Panc1 (cell line): ENCODE measurements at regions of chr6 and their contacts with region 1.

Region 1: GRCh38 chr6:113858480-113859348 is 1.6 kb downstream of the MARCKS start:
- DNase-seq: no peak
- ATAC-seq: peak; percentile 91
- H3K4me3 ChIP-seq: peak overlapping the region; percentile 78 to 86
- H3K27ac ChIP-seq: peak overlapping the region; percentile 88
- H3K4me1 ChIP-seq: peaks cover 6% of the 10 kb centered on the region; the same call in 1 of the 2 replicates
- H3K27me3 ChIP-seq: peaks cover 13% of the 10 kb centered on the region
- CTCF ChIP-seq: peak; percentile 100

Region 2: GRCh38 chr6:112180095-112180820 is 1678.5 kb before region 1 on chr6:
- CTCF ChIA-PET with region 1: interaction called, 6 read pairs
- POLR2A ChIA-PET with region 1: no interaction called
- in situ Hi-C with region 1: no loop called
- intact Hi-C with region 1: loop called (anchors 5 kb)
- DNase-seq: peak; percentile 52
- ATAC-seq: peak; percentile 96
- H3K4me3 ChIP-seq: no peak overlapping the region
- H3K27ac ChIP-seq: no peak overlapping the region; the same call in 1 of the 2 replicates
- H3K4me1 ChIP-seq: no peaks in the 10 kb centered on the region
- H3K27me3 ChIP-seq: no peaks in the 10 kb centered on the region
- CTCF ChIP-seq: peak; percentile 82; the same call in 1 of the 2 replicates

Region 3: GRCh38 chr6:112780498-112781096 is 1078.1 kb before region 1 on chr6:
- CTCF ChIA-PET with region 1: interaction called, 3 read pairs
- POLR2A ChIA-PET with region 1: no interaction called
- in situ Hi-C with region 1: no loop called
- intact Hi-C with region 1: loop called (anchors 5 kb)
- DNase-seq: peak; percentile 60
- ATAC-seq: peak; percentile 91
- H3K4me3 ChIP-seq: no peak overlapping the region
- H3K27ac ChIP-seq: no peak overlapping the region; the same call in 1 of the 2 replicates
- H3K4me1 ChIP-seq: no peaks in the 10 kb centered on the region
- H3K27me3 ChIP-seq: no peaks in the 10 kb centered on the region
- CTCF ChIP-seq: peak; percentile 90

Region 4: GRCh38 chr6:113328886-113329381 is 529.8 kb before region 1 on chr6:
- CTCF ChIA-PET with region 1: no interaction called
- POLR2A ChIA-PET with region 1: no interaction called
- in situ Hi-C with region 1: no loop called
- intact Hi-C with region 1: loop called (anchors 10 kb)
- DNase-seq: no peak
- ATAC-seq: no peak
- H3K4me3 ChIP-seq: no peak overlapping the region
- H3K27ac ChIP-seq: no peak overlapping the region
- H3K4me1 ChIP-seq: no peaks in the 10 kb centered on the region
- H3K27me3 ChIP-seq: no peaks in the 10 kb centered on the region
- CTCF ChIP-seq: no peak

Region 5: DNA sequence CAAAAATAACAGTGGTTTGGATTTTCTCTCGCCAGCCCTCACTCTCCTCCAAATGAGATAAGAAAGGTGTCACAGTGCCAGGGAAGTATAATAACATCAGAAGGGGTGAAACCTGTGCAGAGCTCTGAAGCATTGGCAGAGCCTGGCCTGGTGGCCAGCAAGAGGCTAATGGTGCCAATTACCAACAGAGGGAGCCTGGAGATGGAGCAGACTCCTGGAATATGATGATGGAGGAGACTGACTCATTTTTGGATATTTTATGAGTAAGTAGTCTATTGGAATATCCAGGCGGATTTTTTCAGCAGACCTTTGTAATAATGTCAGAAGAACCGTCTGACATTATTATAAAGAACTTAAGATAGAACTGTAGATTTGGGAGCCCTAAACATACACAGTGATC is 444.2 kb before region 1 on chr6:
- CTCF ChIA-PET with region 1: no interaction called
- POLR2A ChIA-PET with region 1: no interaction called
- in situ Hi-C with region 1: no loop called
- intact Hi-C with region 1: loop called (anchors 10 kb)
- DNase-seq: peak; percentile 51
- ATAC-seq: peak; percentile 94
- H3K4me3 ChIP-seq: no peak overlapping the region
- H3K27ac ChIP-seq: no peak overlapping the region
- H3K4me1 ChIP-seq: no peaks in the 10 kb centered on the region
- H3K27me3 ChIP-seq: no peaks in the 10 kb centered on the region
- CTCF ChIP-seq: peak; percentile 81

Region 6: DNA sequence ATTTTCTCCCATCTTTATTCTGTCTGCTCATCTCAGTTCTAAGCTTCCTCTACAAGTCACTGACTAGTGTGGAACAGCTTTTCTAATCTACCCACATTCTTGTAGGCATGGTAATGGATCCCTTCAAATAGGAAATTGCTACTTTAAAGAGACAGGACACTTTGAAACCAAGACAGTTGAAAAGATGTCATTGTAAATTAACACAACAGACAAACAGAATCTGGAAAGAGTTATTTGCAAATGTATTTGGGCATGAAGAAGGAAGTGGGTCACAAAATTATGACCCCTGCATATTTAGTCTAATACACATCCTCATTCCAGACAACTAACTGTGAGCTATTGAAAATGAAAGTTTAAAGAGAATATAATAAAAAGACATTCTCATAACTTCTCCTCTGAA is 299.7 kb before region 1 on chr6:
- CTCF ChIA-PET with region 1: interaction called, 10 read pairs
- POLR2A ChIA-PET with region 1: no interaction called
- in situ Hi-C with region 1: no loop called
- intact Hi-C with region 1: no loop called
- DNase-seq: no peak
- ATAC-seq: no peak
- H3K4me3 ChIP-seq: no peak overlapping the region
- H3K27ac ChIP-seq: no peak overlapping the region
- H3K4me1 ChIP-seq: no peaks in the 10 kb centered on the region
- H3K27me3 ChIP-seq: no peaks in the 10 kb centered on the region
- CTCF ChIP-seq: no peak

Region 7: DNA sequence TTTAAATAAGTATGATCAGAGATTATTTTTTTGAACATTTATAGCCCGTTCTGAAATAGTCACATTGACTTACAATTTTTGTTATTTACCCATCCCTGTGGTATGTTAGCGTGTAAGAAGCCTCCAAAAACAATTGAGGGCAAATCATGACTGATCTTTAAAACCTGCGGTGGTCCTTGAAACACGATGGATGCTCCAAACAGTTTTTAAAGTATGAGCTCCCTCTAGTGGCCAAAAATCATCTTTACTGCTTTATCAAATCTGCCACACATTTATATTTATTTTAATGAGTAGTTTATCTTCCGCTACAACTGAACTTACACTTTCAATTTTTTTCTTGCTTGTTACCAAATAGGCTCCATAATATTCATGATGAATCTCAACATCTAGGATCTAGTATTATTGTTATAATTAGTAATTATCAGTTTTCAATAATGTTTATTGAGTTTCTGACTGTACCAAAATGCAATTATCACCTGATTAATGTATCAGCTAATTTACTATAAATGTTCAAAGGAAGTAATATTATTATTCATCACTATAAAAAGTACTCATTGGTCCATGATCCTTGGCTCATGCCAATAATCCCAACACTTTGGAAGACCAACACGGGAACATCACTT is 50.6 kb after region 1 on chr6:
- CTCF ChIA-PET with region 1: interaction called, 11 read pairs
- POLR2A ChIA-PET with region 1: no interaction called
- in situ Hi-C with region 1: no loop called
- intact Hi-C with region 1: no loop called
- DNase-seq: peak; percentile 39
- ATAC-seq: peak; percentile 78
- H3K4me3 ChIP-seq: no peak overlapping the region
- H3K27ac ChIP-seq: no peak overlapping the region
- H3K4me1 ChIP-seq: no peaks in the 10 kb centered on the region
- H3K27me3 ChIP-seq: no peaks in the 10 kb centered on the region
- CTCF ChIP-seq: peak; percentile 83; the same call in 1 of the 2 replicates